ENCODE measurements at regions of chr1 and their contacts with region 1.

Region 1: DNA sequence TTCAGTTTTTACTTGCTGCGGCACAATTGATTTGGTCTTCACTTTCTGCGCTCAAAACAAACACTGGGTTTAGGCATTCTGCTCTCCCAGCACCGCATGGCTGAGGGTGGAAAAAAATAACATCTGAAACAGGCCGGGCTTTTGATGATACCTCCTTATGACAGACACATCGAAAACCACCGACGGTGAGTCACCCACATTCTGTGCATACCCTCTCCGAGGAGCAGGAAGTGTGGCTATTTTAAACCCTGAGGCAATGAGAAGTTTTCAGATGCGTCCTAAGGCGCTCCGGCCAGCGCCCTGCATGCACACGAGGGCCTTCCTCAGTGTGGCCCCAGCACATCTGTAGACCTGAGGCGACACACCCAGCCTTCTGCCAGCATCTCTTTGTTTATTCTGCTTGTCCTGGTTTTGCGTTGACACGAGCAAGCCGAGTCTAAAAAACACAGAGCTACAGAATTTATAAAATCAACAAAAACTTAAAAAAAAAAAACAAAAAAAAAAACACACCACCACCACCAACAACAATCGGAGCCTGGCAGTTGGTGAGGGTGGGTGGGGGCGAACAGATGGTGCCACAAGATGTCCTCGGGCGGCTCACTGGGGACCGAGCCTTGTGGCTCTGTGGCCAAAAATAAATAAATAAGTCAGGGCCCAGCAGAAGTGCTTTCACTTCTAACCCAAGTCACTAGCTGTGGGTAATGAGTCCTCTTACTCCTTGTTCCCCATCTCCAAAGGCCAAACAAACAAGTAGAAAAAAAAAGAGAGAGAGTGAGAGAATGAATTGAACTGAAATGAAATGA is 162.6 kb upstream of the IRF2BP2 start:
- DNase-seq: peak; percentile 81 to 96 (median 82)
- H3K4me3 ChIP-seq: no peak overlapping the region
- H3K4me3 Mint-ChIP-seq: peak overlapping the region; percentile 65 to 89 (median 84)
- H3K27ac ChIP-seq: peak overlapping the region; percentile 58
- H3K27ac Mint-ChIP-seq: peak overlapping the region; percentile 91 to 99 (median 98)
- H3K4me1 ChIP-seq: peaks cover 54% of the 10 kb centered on the region
- H3K4me1 Mint-ChIP-seq: peaks cover 42 to 56% (median 49%) of the 10 kb centered on the region in 4 donors
- H3K27me3 ChIP-seq: peaks cover 11% of the 10 kb centered on the region
- H3K27me3 Mint-ChIP-seq: no peaks in the 10 kb centered on the region

Region 2: GRCh38 chr1:234544087-234544579 is 228.4 kb before region 1 on chr1:
- CTCF ChIA-PET with region 1: no interaction called
- POLR2A ChIA-PET with region 1: no interaction called
- intact Hi-C with region 1: no loop called
- DNase-seq: peak in 4 of 5 donors; percentile 15 to 34 (median 32)
- H3K4me3 ChIP-seq: no peak overlapping the region
- H3K4me3 Mint-ChIP-seq: peak overlapping the region in 1 of 8 donors; percentile 49
- H3K27ac ChIP-seq: no peak overlapping the region
- H3K27ac Mint-ChIP-seq: peak overlapping the region in 4 of 7 donors; percentile 9 to 70 (median 28)
- H3K4me1 ChIP-seq: peaks cover 17% of the 10 kb centered on the region
- H3K4me1 Mint-ChIP-seq: peaks cover 11 to 18% (median 15%) of the 10 kb centered on the region in 4 donors
- H3K27me3 ChIP-seq: no peaks in the 10 kb centered on the region
- H3K27me3 Mint-ChIP-seq: peaks cover 0 to 1% of the 10 kb centered on the region in 2 donors

Region 3: GRCh38 chr1:234758851-234759250 is 13.7 kb before region 1 on chr1:
- CTCF ChIA-PET with region 1: interaction called, 4 read pairs
- POLR2A ChIA-PET with region 1: interaction called, 17 read pairs
- intact Hi-C with region 1: loop called (anchors 1 kb)
- DNase-seq: peak; percentile 78 to 89 (median 83)
- H3K4me3 ChIP-seq: no peak overlapping the region
- H3K4me3 Mint-ChIP-seq: peak overlapping the region; percentile 27 to 85 (median 70)
- H3K27ac ChIP-seq: peak overlapping the region; percentile 36
- H3K27ac Mint-ChIP-seq: peak overlapping the region; percentile 88 to 99 (median 97)
- H3K4me1 ChIP-seq: peaks cover 39% of the 10 kb centered on the region
- H3K4me1 Mint-ChIP-seq: peaks cover 22 to 49% (median 33%) of the 10 kb centered on the region in 4 donors
- H3K27me3 ChIP-seq: no peaks in the 10 kb centered on the region
- H3K27me3 Mint-ChIP-seq: no peaks in the 10 kb centered on the region

Region 4: DNA sequence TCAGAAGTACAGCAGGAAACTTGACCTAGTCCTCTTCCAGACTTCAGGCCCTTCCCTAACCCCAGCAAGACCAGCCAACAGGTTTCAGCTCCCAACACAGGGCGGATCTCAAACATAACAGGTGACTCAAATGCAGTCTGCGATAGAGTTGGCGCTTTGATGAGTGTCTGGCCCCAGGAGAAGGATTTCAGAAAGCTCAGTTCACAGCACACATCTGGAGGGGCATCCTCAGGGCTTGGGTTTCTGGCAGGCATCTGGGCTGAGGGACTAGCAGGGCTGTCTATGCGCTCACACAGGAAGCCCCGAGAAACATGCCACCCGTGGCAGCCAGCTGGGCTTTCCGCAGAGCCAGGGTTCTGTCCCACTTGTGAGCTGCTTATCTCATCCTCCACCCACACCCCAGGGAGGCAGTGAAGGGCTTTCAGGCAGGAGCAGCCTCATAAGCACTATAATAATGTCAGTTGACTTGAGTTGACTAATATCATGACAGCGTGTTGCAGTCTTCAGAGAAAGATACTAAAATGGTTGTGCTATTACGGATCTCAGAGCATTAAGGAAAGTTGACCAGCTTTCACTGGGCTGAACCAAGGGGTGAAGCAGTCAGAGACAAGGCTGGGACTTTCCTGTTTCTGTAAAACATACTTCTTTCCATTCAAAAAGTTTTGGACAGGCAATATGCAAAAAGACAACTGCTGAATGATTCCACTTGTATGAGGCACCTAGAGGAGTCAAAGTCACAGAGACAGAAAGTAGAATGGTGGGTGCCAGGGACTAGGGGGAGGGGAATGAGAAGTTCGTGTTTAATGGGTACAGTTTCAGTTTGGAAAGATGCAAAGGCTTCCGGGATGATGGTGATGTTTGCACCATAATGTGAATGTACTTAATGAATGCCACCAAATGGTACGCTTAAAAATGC is 70.4 kb after region 1 on chr1:
- CTCF ChIA-PET with region 1: no interaction called
- POLR2A ChIA-PET with region 1: interaction called, 8 read pairs
- intact Hi-C with region 1: loop called (anchors 5 kb)
- DNase-seq: peak; percentile 34 to 76 (median 44)
- H3K4me3 ChIP-seq: peak overlapping the region in 1 of 2 donors; percentile 28
- H3K4me3 Mint-ChIP-seq: peak overlapping the region; percentile 33 to 83 (median 58)
- H3K27ac ChIP-seq: peak overlapping the region; percentile 39
- H3K27ac Mint-ChIP-seq: peak overlapping the region; percentile 76 to 91 (median 83)
- H3K4me1 ChIP-seq: peaks cover 65% of the 10 kb centered on the region
- H3K4me1 Mint-ChIP-seq: peaks cover 47 to 73% (median 60%) of the 10 kb centered on the region in 4 donors
- H3K27me3 ChIP-seq: no peaks in the 10 kb centered on the region
- H3K27me3 Mint-ChIP-seq: no peaks in the 10 kb centered on the region

Region 5: GRCh38 chr1:234925440-234926263 is 153.1 kb after region 1 on chr1:
- CTCF ChIA-PET with region 1: no interaction called
- POLR2A ChIA-PET with region 1: interaction called, 4 read pairs
- intact Hi-C with region 1: loop called (anchors 2 kb)
- DNase-seq: peak in 4 of 5 donors; percentile 33 to 55 (median 46)
- H3K4me3 ChIP-seq: peak overlapping the region; percentile 27 to 48
- H3K4me3 Mint-ChIP-seq: peak overlapping the region; percentile 73 to 92 (median 84)
- H3K27ac ChIP-seq: no peak overlapping the region
- H3K27ac Mint-ChIP-seq: peak overlapping the region; percentile 85 to 99 (median 92)
- H3K4me1 ChIP-seq: peaks cover 49% of the 10 kb centered on the region
- H3K4me1 Mint-ChIP-seq: peaks cover 31 to 49% (median 43%) of the 10 kb centered on the region in 4 donors
- H3K27me3 ChIP-seq: no peaks in the 10 kb centered on the region
- H3K27me3 Mint-ChIP-seq: no peaks in the 10 kb centered on the region

Region 6: GRCh38 chr1:234963180-234963903 is 190.8 kb after region 1 on chr1:
- CTCF ChIA-PET with region 1: no interaction called
- POLR2A ChIA-PET with region 1: interaction called, 6 read pairs
- intact Hi-C with region 1: loop called (anchors 5 kb)
- DNase-seq: peak; percentile 85 to 94 (median 86)
- H3K4me3 ChIP-seq: peak overlapping the region; percentile 14 to 46
- H3K4me3 Mint-ChIP-seq: peak overlapping the region; percentile 41 to 89 (median 84)
- H3K27ac ChIP-seq: peak overlapping the region; percentile 89
- H3K27ac Mint-ChIP-seq: peak overlapping the region; percentile 90 to 98 (median 96)
- H3K4me1 ChIP-seq: peaks cover 72% of the 10 kb centered on the region
- H3K4me1 Mint-ChIP-seq: peaks cover 58 to 76% (median 64%) of the 10 kb centered on the region in 4 donors
- H3K27me3 ChIP-seq: no peaks in the 10 kb centered on the region
- H3K27me3 Mint-ChIP-seq: no peaks in the 10 kb centered on the region

Region 7: GRCh38 chr1:235004840-235005391 is 232.4 kb after region 1 on chr1:
- CTCF ChIA-PET with region 1: no interaction called
- POLR2A ChIA-PET with region 1: no interaction called
- intact Hi-C with region 1: no loop called
- DNase-seq: no peak
- H3K4me3 ChIP-seq: no peak overlapping the region
- H3K4me3 Mint-ChIP-seq: no peak overlapping the region
- H3K27ac ChIP-seq: no peak overlapping the region
- H3K27ac Mint-ChIP-seq: peak overlapping the region in 3 of 7 donors; percentile 8 to 58 (median 19)
- H3K4me1 ChIP-seq: peaks cover 3% of the 10 kb centered on the region
- H3K4me1 Mint-ChIP-seq: peaks cover 13 to 35% (median 23%) of the 10 kb centered on the region in 4 donors
- H3K27me3 ChIP-seq: no peaks in the 10 kb centered on the region
- H3K27me3 Mint-ChIP-seq: no peaks in the 10 kb centered on the region

Region 8: GRCh38 chr1:235075188-235075926 is 302.8 kb after region 1 on chr1:
- CTCF ChIA-PET with region 1: no interaction called
- POLR2A ChIA-PET with region 1: no interaction called
- intact Hi-C with region 1: loop called (anchors 5 kb)
- DNase-seq: peak; percentile 22 to 66 (median 32)
- H3K4me3 ChIP-seq: peak overlapping the region in 1 of 2 donors; percentile 16
- H3K4me3 Mint-ChIP-seq: peak overlapping the region; percentile 75 to 93 (median 82)
- H3K27ac ChIP-seq: peak overlapping the region; percentile 1
- H3K27ac Mint-ChIP-seq: peak overlapping the region; percentile 22 to 93 (median 88)
- H3K4me1 ChIP-seq: peaks cover 25% of the 10 kb centered on the region
- H3K4me1 Mint-ChIP-seq: peaks cover 23 to 32% (median 27%) of the 10 kb centered on the region in 4 donors
- H3K27me3 ChIP-seq: no peaks in the 10 kb centered on the region
- H3K27me3 Mint-ChIP-seq: no peaks in the 10 kb centered on the region

Region 9: DNA sequence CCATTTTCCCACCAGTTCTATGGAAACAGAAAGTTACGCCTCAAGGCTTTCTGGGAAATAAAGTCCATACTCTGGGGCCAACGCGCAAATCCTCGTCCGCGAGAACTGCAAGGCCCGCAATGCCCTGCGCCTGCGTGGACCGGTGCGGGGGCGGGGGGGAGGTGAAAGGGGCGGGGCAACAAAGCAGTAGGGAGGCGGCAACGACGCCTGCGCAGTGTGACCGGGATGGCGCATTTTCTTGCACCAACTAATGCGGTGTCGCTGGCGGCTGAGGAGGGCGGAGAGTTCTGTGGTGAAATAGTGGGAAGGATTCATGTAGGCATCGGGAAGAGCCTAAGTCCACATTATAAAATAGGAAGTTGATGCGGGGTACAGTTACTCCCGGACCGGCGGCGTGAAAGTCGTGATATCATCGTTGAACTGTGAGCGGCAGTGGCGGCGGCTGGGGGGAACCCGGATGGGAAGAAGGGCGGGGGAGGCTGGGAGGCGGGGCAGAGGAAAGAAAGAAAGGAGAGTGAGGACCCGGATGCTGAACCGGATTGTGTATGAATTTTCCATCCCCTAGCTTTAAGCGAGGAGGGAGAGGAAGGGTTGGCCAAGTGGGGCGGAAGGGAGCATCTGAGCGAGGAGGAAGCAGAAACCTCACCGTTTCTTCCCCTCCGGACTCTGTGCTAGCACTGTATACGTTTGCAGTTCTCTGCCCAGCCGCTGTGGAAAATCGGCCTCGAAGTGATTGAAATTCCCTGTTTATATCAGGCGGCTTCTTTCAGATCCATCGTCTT is 556.0 kb after region 1 on chr1 and contains the start of gene GGPS1:
- CTCF ChIA-PET with region 1: no interaction called
- POLR2A ChIA-PET with region 1: no interaction called
- intact Hi-C with region 1: no loop called
- DNase-seq: peak; percentile 95 to 99 (median 98)
- H3K4me3 ChIP-seq: peak within 1 kb of the TSS; percentile 88 to 93
- H3K4me3 Mint-ChIP-seq: no peak within 1 kb of the TSS
- H3K27ac ChIP-seq: peak within 1 kb of the TSS; percentile 99
- H3K27ac Mint-ChIP-seq: peak within 1 kb of the TSS in 3 of 7 donors; percentile 90 to 93 (median 90)
- H3K4me1 ChIP-seq: peaks cover 73% of the 10 kb centered on the region
- H3K4me1 Mint-ChIP-seq: peaks cover 32 to 39% (median 35%) of the 10 kb centered on the region in 4 donors
- H3K27me3 ChIP-seq: no peaks in the 10 kb centered on the region
- H3K27me3 Mint-ChIP-seq: no peaks in the 10 kb centered on the region
- total RNA-seq, gene GGPS1: 50.3 to 52.5 TPM